Caco-2 (cell line): ENCODE measurements at regions of chr10 and their contacts with region 1.

Region 1: GRCh38 chr10:78972947-78973900 is 95.5 kb upstream of the ZMIZ1 start:
- DNase-seq: peak; percentile 83 to 86
- H3K4me3 ChIP-seq: peak overlapping the region; percentile 44
- H3K4me3 Mint-ChIP-seq: peak overlapping the region; percentile 84
- H3K27ac Mint-ChIP-seq: peak overlapping the region; percentile 89
- H3K4me1 ChIP-seq: peaks cover 23% of the 10 kb centered on the region
- H3K4me1 Mint-ChIP-seq: peaks cover 16% of the 10 kb centered on the region
- H3K27me3 ChIP-seq: no peaks in the 10 kb centered on the region
- H3K27me3 Mint-ChIP-seq: no peaks in the 10 kb centered on the region
- CTCF ChIP-seq: no peak

Region 2: GRCh38 chr10:78211561-78212051 is 761.6 kb before region 1 on chr10:
- CTCF ChIA-PET with region 1: no interaction called
- POLR2A ChIA-PET with region 1: no interaction called
- intact Hi-C with region 1: loop called (anchors 2 kb)
- DNase-seq: peak in 1 of 2 experiments; percentile 58
- H3K4me3 ChIP-seq: no peak overlapping the region
- H3K4me3 Mint-ChIP-seq: no peak overlapping the region
- H3K27ac Mint-ChIP-seq: no peak overlapping the region
- H3K4me1 ChIP-seq: no peaks in the 10 kb centered on the region
- H3K4me1 Mint-ChIP-seq: no peaks in the 10 kb centered on the region
- H3K27me3 ChIP-seq: no peaks in the 10 kb centered on the region; the same call in 1 of the 2 replicates
- H3K27me3 Mint-ChIP-seq: no peaks in the 10 kb centered on the region
- CTCF ChIP-seq: peak; percentile 36 to 75

Region 3: GRCh38 chr10:78458983-78459638 is 514.1 kb before region 1 on chr10:
- CTCF ChIA-PET with region 1: no interaction called
- POLR2A ChIA-PET with region 1: no interaction called
- intact Hi-C with region 1: loop called (anchors 10 kb)
- DNase-seq: peak; percentile 75 to 81
- H3K4me3 ChIP-seq: no peak overlapping the region
- H3K4me3 Mint-ChIP-seq: peak overlapping the region; percentile 37
- H3K27ac Mint-ChIP-seq: peak overlapping the region; percentile 61
- H3K4me1 ChIP-seq: peaks cover 43% of the 10 kb centered on the region
- H3K4me1 Mint-ChIP-seq: peaks cover 31% of the 10 kb centered on the region
- H3K27me3 ChIP-seq: no peaks in the 10 kb centered on the region
- H3K27me3 Mint-ChIP-seq: no peaks in the 10 kb centered on the region
- CTCF ChIP-seq: no peak

Region 4: DNA sequence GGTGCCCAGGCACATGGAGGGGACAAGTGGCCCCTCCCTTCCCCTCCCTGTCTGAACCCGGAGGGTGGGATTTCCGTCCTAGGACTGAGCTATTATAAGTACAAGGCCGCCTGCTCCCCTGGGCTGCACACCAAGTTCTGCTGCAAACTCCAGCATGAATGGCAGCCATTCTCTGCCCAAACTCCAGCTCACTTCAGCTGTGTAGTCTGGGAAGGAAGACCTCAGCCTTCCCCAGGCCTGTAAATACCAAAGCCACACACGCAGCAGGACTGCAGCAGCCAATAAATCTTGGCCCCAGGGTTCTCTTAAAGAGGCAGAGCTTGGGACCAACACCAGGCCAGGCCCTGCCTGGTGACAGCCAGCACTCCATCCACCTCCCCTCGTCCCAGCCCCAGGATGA is 195.8 kb before region 1 on chr10:
- CTCF ChIA-PET with region 1: no interaction called
- POLR2A ChIA-PET with region 1: no interaction called
- intact Hi-C with region 1: no loop called
- DNase-seq: no peak
- H3K4me3 ChIP-seq: no peak overlapping the region
- H3K4me3 Mint-ChIP-seq: no peak overlapping the region
- H3K27ac Mint-ChIP-seq: no peak overlapping the region
- H3K4me1 ChIP-seq: peaks cover 17% of the 10 kb centered on the region
- H3K4me1 Mint-ChIP-seq: peaks cover 7% of the 10 kb centered on the region
- H3K27me3 ChIP-seq: no peaks in the 10 kb centered on the region
- H3K27me3 Mint-ChIP-seq: no peaks in the 10 kb centered on the region
- CTCF ChIP-seq: no peak

Region 5: GRCh38 chr10:78937800-78938694 is 35.2 kb before region 1 on chr10:
- CTCF ChIA-PET with region 1: interaction called, 3 read pairs
- POLR2A ChIA-PET with region 1: no interaction called
- intact Hi-C with region 1: loop called (anchors 5 kb)
- DNase-seq: no peak
- H3K4me3 ChIP-seq: no peak overlapping the region
- H3K4me3 Mint-ChIP-seq: no peak overlapping the region
- H3K27ac Mint-ChIP-seq: no peak overlapping the region
- H3K4me1 ChIP-seq: no peaks in the 10 kb centered on the region
- H3K4me1 Mint-ChIP-seq: no peaks in the 10 kb centered on the region
- H3K27me3 ChIP-seq: no peaks in the 10 kb centered on the region
- H3K27me3 Mint-ChIP-seq: no peaks in the 10 kb centered on the region
- CTCF ChIP-seq: no peak

Region 6: GRCh38 chr10:79059859-79060379 is 86.7 kb after region 1 on chr10:
- CTCF ChIA-PET with region 1: interaction called, 6 read pairs
- POLR2A ChIA-PET with region 1: interaction called, 6 read pairs
- intact Hi-C with region 1: loop called (anchors 2 kb)
- DNase-seq: peak in 1 of 2 experiments; percentile 42
- H3K4me3 ChIP-seq: no peak overlapping the region
- H3K4me3 Mint-ChIP-seq: peak overlapping the region; percentile 49
- H3K27ac Mint-ChIP-seq: peak overlapping the region; percentile 82
- H3K4me1 ChIP-seq: peaks cover 52% of the 10 kb centered on the region
- H3K4me1 Mint-ChIP-seq: peaks cover 45% of the 10 kb centered on the region
- H3K27me3 ChIP-seq: no peaks in the 10 kb centered on the region
- H3K27me3 Mint-ChIP-seq: no peaks in the 10 kb centered on the region
- CTCF ChIP-seq: no peak

Region 7: DNA sequence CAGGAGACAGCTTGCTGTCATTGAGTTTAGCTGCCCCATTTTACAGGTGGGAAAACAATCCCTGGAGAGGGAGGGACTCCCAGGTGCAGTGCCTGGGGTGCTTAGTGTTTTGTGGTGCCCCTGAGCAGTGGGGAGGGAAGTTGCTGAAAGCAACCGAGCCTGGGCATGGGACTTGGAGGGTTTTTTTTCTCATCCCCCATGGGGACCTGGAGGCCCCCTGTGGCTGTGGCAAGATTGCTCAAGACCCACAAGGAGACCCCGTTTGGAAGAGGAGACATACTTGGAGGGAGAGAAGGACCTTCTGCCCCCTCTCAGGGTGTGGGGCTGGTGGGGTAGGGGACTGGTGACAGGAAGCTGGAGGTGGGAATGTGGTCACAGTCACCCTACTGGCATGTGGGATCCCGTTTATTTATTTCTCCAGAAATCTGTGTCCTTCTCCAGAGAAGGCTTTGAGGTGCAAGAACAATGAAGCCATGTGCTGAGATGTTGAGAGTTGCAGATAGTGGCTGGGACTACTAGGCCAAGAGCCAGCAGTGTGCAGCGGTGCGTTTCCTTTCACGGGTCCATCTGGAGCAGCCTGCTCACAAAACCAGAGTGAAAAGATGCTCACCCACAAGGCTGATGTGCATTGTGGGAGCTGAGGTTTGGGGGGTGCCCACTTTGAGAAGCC is 117.0 kb after region 1 on chr10:
- CTCF ChIA-PET with region 1: no interaction called
- POLR2A ChIA-PET with region 1: no interaction called
- intact Hi-C with region 1: no loop called
- DNase-seq: no peak
- H3K4me3 ChIP-seq: no peak overlapping the region
- H3K4me3 Mint-ChIP-seq: no peak overlapping the region
- H3K27ac Mint-ChIP-seq: no peak overlapping the region
- H3K4me1 ChIP-seq: peaks cover 18% of the 10 kb centered on the region
- H3K4me1 Mint-ChIP-seq: peaks cover 44% of the 10 kb centered on the region
- H3K27me3 ChIP-seq: no peaks in the 10 kb centered on the region
- H3K27me3 Mint-ChIP-seq: no peaks in the 10 kb centered on the region
- CTCF ChIP-seq: no peak

Region 8: GRCh38 chr10:79374312-79375191 is 401.3 kb after region 1 on chr10:
- CTCF ChIA-PET with region 1: no interaction called
- POLR2A ChIA-PET with region 1: no interaction called
- intact Hi-C with region 1: no loop called
- DNase-seq: peak; percentile 83 to 91
- H3K4me3 ChIP-seq: no peak overlapping the region
- H3K4me3 Mint-ChIP-seq: no peak overlapping the region
- H3K27ac Mint-ChIP-seq: peak overlapping the region; percentile 23
- H3K4me1 ChIP-seq: no peaks in the 10 kb centered on the region
- H3K4me1 Mint-ChIP-seq: no peaks in the 10 kb centered on the region
- H3K27me3 ChIP-seq: no peaks in the 10 kb centered on the region
- H3K27me3 Mint-ChIP-seq: no peaks in the 10 kb centered on the region
- CTCF ChIP-seq: peak; percentile 91 to 97